BJ (cell line): ENCODE measurements at regions of chr2 and their contacts with region 1.

Region 1: DNA sequence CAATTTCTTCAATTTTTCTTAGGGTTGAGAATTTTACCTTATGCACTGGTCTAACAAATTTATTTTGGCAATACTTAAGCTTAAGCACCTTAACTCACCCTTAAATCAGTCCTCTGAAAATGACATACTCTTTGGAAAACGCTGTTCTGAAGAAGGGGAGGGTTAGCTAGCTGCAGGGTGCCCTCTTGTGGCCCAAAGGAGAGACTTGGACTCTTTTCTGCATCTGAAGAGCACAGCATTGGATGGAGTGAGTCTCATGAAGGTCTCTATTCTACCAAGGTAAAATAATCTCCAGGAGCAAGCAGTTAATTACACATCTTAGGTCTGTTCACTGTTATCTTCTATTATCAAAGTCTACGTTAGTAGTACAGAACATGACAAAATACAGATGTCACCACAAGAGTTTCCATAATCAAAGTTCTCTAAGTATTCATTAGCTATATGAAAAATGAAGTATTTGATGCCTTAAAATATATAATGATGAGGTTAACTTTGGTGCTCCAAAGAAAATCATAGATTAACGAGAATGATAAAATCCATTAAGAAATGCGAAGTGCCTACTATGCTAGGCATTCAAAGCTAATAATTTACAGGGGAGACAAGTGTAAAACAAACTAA is 24.4 kb downstream of the PUM2 start:
- DNase-seq: no peak
- H3K4me3 ChIP-seq: no peak overlapping the region
- H3K27me3 ChIP-seq: no peaks in the 10 kb centered on the region
- CTCF ChIP-seq: peak; percentile 92

Region 2: GRCh38 chr2:20040489-20041172 is 285.6 kb before region 1 on chr2:
- CTCF ChIA-PET with region 1: no interaction called
- POLR2A ChIA-PET with region 1: no interaction called
- DNase-seq: no peak
- H3K4me3 ChIP-seq: no peak overlapping the region
- H3K27me3 ChIP-seq: no peaks in the 10 kb centered on the region
- CTCF ChIP-seq: no peak

Region 3: DNA sequence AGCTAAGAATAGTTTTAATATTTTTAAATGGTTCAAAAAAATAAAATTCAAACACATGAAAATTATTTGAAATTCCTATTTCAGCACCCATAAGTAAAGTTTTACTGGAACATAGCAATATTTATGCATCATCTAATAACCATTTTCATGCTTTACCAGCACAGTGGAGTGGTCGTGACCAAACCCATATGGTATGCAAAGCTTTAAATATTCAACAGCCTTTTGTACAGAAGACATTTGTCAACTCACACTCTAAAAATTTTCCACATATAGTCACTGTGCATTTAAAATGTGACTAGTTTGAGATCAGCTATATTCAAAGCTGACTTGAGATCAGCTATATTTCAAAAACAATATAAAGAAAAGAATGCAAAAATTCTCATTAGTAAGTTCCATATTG is 21.9 kb before region 1 on chr2:
- CTCF ChIA-PET with region 1: interaction called, 12 read pairs
- POLR2A ChIA-PET with region 1: interaction called, 3 read pairs
- DNase-seq: no peak
- H3K4me3 ChIP-seq: no peak overlapping the region
- H3K27me3 ChIP-seq: no peaks in the 10 kb centered on the region
- CTCF ChIP-seq: no peak

Region 4: GRCh38 chr2:20313659-20314058 is 12.6 kb before region 1 on chr2:
- CTCF ChIA-PET with region 1: interaction called, 13 read pairs
- POLR2A ChIA-PET with region 1: no interaction called
- DNase-seq: no peak
- H3K4me3 ChIP-seq: no peak overlapping the region
- H3K27me3 ChIP-seq: no peaks in the 10 kb centered on the region
- CTCF ChIP-seq: no peak

Region 5: DNA sequence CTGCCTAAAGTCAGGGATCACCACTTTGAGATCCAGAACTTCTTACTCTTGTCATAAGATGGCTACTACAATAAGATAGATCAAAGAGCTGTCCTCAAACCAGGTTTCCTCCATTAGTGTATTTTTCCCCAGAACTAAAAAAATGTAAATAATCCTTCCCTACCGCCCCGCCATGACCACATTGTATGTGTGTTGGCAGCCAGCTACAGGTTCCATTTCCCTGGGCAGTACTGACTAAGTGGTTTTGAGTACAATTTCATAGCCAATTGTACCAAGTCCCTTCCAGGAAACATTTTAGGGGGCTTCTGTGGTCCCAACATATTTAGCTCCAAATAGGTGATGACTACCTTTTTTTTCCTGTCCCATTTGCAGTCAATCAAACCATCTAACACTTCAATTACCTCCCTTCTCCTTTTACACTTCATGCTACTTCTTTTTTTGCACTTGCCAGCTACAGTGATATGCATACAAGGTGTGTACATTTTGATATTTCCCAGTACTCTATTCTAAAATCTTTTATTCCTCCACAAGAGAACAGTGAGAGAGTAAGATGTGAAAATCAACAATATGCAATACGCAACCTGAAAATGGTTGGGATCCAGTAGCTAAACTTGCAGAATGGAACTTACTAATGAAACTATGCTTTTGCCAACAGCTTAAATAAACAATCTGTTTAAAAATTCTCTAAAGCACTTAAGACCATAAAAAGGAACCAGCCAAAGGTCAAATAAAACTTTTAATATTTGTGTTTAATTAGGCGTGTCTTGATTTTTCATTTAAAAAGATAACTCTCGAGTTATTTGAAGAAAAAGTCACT is 20.5 kb after region 1 on chr2:
- CTCF ChIA-PET with region 1: interaction called, 10 read pairs
- POLR2A ChIA-PET with region 1: no interaction called
- DNase-seq: no peak
- H3K4me3 ChIP-seq: no peak overlapping the region
- H3K27me3 ChIP-seq: no peaks in the 10 kb centered on the region
- CTCF ChIP-seq: no peak